ENCODE measurements at regions of chr1 and their contacts with region 1.

Region 1: DNA sequence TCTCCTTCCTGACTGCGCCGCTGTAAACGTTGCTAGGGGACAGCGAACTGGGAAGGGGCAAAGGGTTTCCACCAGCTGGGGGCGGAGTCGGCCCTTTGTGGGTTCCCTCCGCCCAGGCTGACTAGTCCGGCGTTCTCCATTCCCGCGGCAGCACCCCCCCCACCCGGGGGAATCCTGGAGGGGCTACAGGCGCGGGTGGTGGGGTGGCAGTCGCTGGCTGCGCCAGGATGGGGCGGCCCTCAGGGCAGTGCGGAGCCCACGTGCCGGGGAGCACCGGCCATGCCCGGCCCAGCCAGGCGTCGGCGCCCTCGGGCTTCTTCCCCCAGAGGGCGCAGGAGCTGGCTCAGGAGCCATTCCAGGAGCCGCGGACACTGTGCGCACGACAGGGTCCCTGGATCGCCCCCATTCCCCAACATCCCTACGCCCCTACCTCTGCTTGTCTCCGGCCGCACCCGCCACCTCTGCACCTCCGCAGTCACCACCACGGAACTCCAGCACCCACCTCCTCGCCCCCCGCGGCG is 476 bp downstream of the BATF3 start:
- DNase-seq: peak; percentile 46 to 76
- H3K4me3 ChIP-seq: peak overlapping the region; percentile 58
- H3K4me3 Mint-ChIP-seq: peak overlapping the region; percentile 73
- H3K27ac Mint-ChIP-seq: no peak overlapping the region
- H3K4me1 ChIP-seq: peaks cover 37% of the 10 kb centered on the region
- H3K4me1 Mint-ChIP-seq: peaks cover 22% of the 10 kb centered on the region
- H3K27me3 ChIP-seq: peaks cover 8% of the 10 kb centered on the region
- H3K27me3 Mint-ChIP-seq: peaks cover 35% of the 10 kb centered on the region
- CTCF ChIP-seq: peak in 1 of 2 experiments; percentile 73

Region 2: DNA sequence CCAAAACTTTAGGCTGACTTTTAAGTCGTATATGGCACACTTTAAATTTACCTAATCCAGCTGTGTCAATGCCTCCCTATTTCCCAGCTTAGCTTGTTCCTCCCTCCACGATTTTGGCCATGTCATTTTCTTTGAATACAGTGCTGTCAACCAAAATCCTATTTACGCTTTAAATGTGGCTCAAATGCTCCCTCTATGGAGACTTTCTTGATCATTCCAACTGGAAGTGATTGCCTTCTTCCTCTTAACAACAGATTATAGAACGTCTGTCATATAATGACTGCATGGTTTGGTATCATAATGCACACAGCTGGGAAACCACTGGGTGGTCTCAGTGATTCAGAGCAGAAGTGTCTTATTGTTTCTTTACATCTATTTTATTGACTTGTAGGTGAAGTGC is 19.3 kb after region 1 on chr1:
- CTCF ChIA-PET with region 1: no interaction called
- POLR2A ChIA-PET with region 1: no interaction called
- intact Hi-C with region 1: loop called (anchors 1 kb)
- DNase-seq: no peak
- H3K4me3 ChIP-seq: no peak overlapping the region
- H3K4me3 Mint-ChIP-seq: no peak overlapping the region
- H3K27ac Mint-ChIP-seq: no peak overlapping the region
- H3K4me1 ChIP-seq: peaks cover 15% of the 10 kb centered on the region
- H3K4me1 Mint-ChIP-seq: peaks cover 8% of the 10 kb centered on the region
- H3K27me3 ChIP-seq: no peaks in the 10 kb centered on the region; the same call in 1 of the 2 replicates
- H3K27me3 Mint-ChIP-seq: peaks cover 20% of the 10 kb centered on the region
- CTCF ChIP-seq: peak in 1 of 2 experiments; percentile 27

Region 3: DNA sequence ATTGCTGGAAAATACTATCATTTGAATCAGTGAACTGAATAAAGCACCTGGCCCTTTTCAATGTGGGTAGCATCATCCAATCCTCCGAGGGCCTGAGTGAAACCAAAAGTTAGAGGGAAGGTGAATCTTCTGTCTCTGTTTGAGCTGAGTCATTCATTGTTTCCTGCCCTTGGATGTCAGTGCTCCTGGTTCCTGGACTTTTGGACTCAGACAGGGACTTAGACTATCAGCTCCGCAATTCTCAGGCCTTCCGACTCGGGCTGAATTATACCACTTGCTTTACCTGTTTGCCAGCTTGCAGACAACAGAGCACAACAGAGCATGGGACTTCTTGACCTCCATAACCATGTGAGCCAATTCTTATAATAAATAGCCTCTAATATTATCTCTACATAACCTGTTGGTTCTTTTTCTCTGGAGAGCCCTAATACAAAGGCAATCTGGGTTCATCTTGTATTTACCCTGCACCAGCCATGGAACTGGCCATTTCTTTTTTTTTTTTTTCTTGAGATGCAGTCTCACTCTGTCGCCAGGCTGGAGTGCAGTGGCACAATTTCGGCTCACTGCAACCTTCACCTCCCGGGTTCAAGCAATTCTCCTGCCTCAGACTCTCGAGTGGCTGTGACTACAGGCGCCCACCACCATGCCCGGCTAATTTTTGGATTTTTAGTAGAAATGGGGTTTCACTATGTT is 232.0 kb after region 1 on chr1:
- CTCF ChIA-PET with region 1: interaction called, 11 read pairs
- POLR2A ChIA-PET with region 1: no interaction called
- intact Hi-C with region 1: no loop called
- DNase-seq: peak; percentile 72 to 76
- H3K4me3 ChIP-seq: no peak overlapping the region
- H3K4me3 Mint-ChIP-seq: no peak overlapping the region
- H3K27ac Mint-ChIP-seq: no peak overlapping the region
- H3K4me1 ChIP-seq: peaks cover 13% of the 10 kb centered on the region
- H3K4me1 Mint-ChIP-seq: peaks cover 12% of the 10 kb centered on the region
- H3K27me3 ChIP-seq: no peaks in the 10 kb centered on the region
- H3K27me3 Mint-ChIP-seq: no peaks in the 10 kb centered on the region
- CTCF ChIP-seq: no peak

Measured in Caco-2 (cell line).